Esophagus muscularis mucosa (tissue), 4 donors: ENCODE measurements at regions of chr13 and their contacts with region 1.

Region 1: DNA sequence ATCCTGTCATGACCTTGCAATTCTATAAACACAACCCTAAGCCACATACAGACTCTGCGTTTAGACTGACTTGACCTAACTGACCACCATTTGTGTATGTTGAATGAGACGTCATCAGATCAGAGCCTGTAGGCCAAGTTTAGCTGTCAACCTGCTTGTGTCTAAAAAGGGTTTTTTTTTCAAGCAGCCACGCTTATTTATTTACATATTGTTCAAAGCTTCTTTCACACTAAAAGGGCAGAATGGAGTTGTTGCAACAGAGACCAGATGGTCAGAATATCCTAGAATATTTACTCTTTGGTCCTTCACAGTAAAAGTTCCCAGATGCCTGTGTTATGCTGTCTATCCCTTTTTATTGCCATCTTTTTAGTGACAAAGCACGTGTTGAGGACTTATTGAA is 307.7 kb upstream of the SLC10A2 start:
- DNase-seq: no peak
- H3K4me3 ChIP-seq: no peak overlapping the region
- H3K27ac ChIP-seq: no peak overlapping the region
- H3K4me1 ChIP-seq: no peaks in the 10 kb centered on the region
- H3K27me3 ChIP-seq: no peaks in the 10 kb centered on the region
- CTCF ChIP-seq: no peak
- EP300 ChIP-seq: no peak
- POLR2A ChIP-seq: no peak

Region 2: GRCh38 chr13:102983496-102983895 is 390.4 kb before region 1 on chr13:
- intact Hi-C with region 1: no loop called
- DNase-seq: peak; percentile 55
- H3K4me3 ChIP-seq: no peak overlapping the region
- H3K27ac ChIP-seq: no peak overlapping the region
- H3K4me1 ChIP-seq: no peaks in the 10 kb centered on the region
- H3K27me3 ChIP-seq: no peaks in the 10 kb centered on the region
- CTCF ChIP-seq: no peak
- EP300 ChIP-seq: no peak
- POLR2A ChIP-seq: no peak

Region 3: GRCh38 chr13:103351035-103351828 is 22.7 kb before region 1 on chr13:
- intact Hi-C with region 1: loop called (anchors 1 kb)
- DNase-seq: no peak
- H3K4me3 ChIP-seq: no peak overlapping the region
- H3K27ac ChIP-seq: no peak overlapping the region
- H3K4me1 ChIP-seq: peaks cover 0 to 12% (median 0%) of the 10 kb centered on the region in 4 donors
- H3K27me3 ChIP-seq: no peaks in the 10 kb centered on the region
- CTCF ChIP-seq: no peak
- EP300 ChIP-seq: no peak
- POLR2A ChIP-seq: no peak

Region 4: GRCh38 chr13:104043184-104043583 is 669.3 kb after region 1 on chr13:
- intact Hi-C with region 1: no loop called
- DNase-seq: no peak
- H3K4me3 ChIP-seq: no peak overlapping the region
- H3K27ac ChIP-seq: no peak overlapping the region
- H3K4me1 ChIP-seq: no peaks in the 10 kb centered on the region
- H3K27me3 ChIP-seq: no peaks in the 10 kb centered on the region
- CTCF ChIP-seq: no peak
- EP300 ChIP-seq: no peak
- POLR2A ChIP-seq: no peak